ENCODE measurements at regions of chr7 and their contacts with region 1.

Region 1: DNA sequence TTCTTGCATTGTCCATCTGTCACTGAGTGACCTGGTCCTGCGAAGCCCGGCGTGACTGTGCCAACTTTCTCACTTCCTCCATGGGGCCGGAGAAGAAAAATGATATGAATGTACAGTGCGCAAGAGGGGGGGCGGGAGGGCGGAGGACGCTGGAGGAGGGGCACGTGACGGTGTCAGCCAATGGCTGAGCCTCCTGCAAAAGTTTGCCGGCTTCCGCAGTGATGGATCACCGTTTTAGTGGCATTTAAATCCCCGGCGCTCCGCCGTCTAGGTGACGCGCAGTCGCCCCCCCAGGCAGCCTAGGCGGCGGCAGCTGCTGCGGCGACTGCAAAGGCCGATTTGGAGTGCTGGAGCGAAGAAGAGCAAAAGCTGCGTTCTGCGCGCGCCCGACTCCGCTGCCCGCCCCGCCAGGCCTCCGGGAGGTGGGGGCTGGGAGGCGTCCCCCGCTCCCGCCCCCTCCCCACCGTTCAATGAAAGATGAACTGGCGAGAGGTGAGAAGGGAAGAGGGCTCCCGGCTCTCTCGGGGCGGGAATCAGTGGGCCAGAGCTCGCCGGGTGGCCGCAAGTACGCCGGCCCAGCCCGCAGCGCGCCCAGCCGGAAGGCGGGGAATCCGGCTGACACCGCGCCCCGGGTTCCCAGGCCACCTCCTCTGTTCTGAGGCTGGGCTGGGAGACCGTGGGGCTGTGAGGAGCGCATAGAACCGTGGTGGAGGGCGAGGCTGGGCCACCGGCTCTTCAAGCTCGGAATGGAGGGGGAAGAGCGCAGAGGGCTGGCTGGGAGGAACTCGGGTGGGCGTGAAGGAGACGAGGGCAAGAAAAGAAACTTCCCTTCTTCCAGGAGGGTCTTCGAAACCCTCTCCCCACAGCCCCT is at the start of gene HOXA1:
- DNase-seq: peak; percentile 94
- ATAC-seq: peak; percentile 65
- H3K4me3 ChIP-seq: peak within 1 kb of the TSS; percentile 84
- H3K27ac ChIP-seq: peak within 1 kb of the TSS; percentile 88
- H3K4me1 ChIP-seq: peaks cover 35% of the 10 kb centered on the region
- H3K27me3 ChIP-seq: no peaks in the 10 kb centered on the region
- CTCF ChIP-seq: no peak
- total RNA-seq, gene HOXA1: 1.4 and 2.0 TPM in 2 replicates

Region 2: DNA sequence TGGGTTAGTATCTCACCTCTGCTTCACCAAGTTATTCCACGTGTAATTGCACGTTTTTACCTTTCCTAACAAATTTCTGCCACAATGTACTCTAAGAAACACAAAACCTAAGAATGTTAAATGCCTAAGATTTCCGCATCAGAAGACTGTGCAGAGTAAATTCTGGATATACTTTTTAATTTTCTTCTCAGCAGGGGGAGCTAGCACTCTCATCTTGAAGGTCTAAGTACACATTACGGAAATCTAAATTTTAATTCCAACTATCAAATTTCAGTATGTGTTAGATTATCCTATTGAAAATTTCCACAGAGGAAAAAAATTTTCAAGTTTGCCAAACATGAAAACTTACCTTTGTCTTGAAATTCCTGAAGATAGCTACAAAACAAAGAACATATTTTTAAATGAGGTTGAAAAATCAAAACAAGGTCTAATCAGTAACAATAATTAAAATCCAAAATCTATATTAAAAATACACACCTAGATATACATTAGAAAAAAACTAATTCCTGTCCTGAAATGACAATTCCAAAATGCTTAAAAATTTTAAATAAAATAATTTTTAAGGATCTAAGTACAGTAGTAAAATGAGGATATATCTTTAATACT is 242.2 kb before region 1 on chr7:
- CTCF ChIA-PET with region 1: no interaction called
- POLR2A ChIA-PET with region 1: interaction called, 3 read pairs
- intact Hi-C with region 1: loop called (anchors 2 kb)
- DNase-seq: peak; percentile 73
- ATAC-seq: peak; percentile 92
- H3K4me3 ChIP-seq: no peak overlapping the region
- H3K27ac ChIP-seq: no peak overlapping the region
- H3K4me1 ChIP-seq: peaks cover 8% of the 10 kb centered on the region; the same call in 1 of the 2 replicates
- H3K27me3 ChIP-seq: no peaks in the 10 kb centered on the region
- CTCF ChIP-seq: peak; percentile 77

Region 3: GRCh38 chr7:27046854-27047549 is 49.1 kb before region 1 on chr7:
- CTCF ChIA-PET with region 1: no interaction called
- POLR2A ChIA-PET with region 1: interaction called, 6 read pairs
- intact Hi-C with region 1: loop called (anchors 2 kb)
- DNase-seq: peak; percentile 79
- ATAC-seq: peak; percentile 96
- H3K4me3 ChIP-seq: peak overlapping the region; percentile 51; the same call in 1 of the 2 replicates
- H3K27ac ChIP-seq: peak overlapping the region; percentile 68
- H3K4me1 ChIP-seq: peaks cover 13% of the 10 kb centered on the region
- H3K27me3 ChIP-seq: no peaks in the 10 kb centered on the region
- CTCF ChIP-seq: no peak

Region 4: GRCh38 chr7:27134392-27134791 is 38.3 kb after region 1 on chr7:
- CTCF ChIA-PET with region 1: interaction called, 5 read pairs
- POLR2A ChIA-PET with region 1: no interaction called
- intact Hi-C with region 1: loop called (anchors 2 kb)
- DNase-seq: peak; percentile 89
- ATAC-seq: peak; percentile 53
- H3K4me3 ChIP-seq: no peak overlapping the region
- H3K27ac ChIP-seq: peak overlapping the region; percentile 87
- H3K4me1 ChIP-seq: peaks cover 45% of the 10 kb centered on the region
- H3K27me3 ChIP-seq: no peaks in the 10 kb centered on the region
- CTCF ChIP-seq: no peak

Region 5: DNA sequence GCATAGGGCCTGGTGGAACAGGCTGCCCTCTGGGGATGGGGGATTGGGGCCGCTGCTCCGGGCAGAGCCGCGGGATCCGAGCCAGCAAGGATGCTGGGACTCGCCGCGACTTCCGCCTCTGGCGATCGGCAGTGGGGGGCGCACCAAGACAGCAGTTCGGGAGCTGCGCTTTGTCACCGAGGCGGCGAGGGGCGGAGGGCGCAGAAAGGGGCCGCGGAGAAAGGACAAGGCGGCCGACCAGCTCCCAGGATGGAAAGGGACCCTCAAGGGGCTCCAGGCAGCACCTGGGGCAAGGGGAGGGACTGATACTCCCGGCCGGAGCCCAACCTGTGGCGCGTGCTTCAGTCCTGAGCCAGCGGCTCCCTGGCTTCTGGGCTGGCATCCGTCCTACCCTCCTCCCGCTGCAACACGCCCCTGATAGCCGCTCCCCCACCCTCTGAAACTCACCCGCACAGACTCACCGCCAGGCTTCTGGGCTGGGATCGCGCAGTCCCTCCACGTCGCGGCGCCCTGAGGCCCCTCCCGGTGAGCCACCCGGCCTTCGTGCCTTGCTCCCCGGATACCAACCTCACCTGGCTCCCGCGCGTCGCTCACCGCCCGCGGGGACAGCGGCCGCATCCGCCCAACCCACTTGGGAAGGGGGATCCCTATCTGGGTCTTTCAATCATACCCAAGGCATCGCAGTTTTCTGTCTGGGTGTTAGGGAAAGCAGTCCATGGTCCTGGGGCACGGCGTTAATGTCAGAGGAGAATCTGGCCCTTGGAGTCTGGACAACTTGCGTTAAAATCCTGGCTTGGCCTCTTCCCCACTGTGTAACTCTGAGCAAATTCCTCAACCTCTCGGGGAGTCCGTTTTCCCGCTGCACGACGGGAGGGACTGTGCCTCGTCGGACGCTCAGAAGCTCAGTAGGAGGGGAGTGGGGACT is 139.5 kb after region 1 on chr7:
- CTCF ChIA-PET with region 1: no interaction called
- POLR2A ChIA-PET with region 1: no interaction called
- intact Hi-C with region 1: no loop called
- DNase-seq: peak; percentile 62
- ATAC-seq: peak; percentile 76
- H3K4me3 ChIP-seq: peak overlapping the region; percentile 72
- H3K27ac ChIP-seq: no peak overlapping the region
- H3K4me1 ChIP-seq: peaks cover 9% of the 10 kb centered on the region; the same call in 1 of the 2 replicates
- H3K27me3 ChIP-seq: no peaks in the 10 kb centered on the region
- CTCF ChIP-seq: peak; percentile 75

Region 6: GRCh38 chr7:27520815-27521790 is 425.0 kb after region 1 on chr7:
- CTCF ChIA-PET with region 1: no interaction called
- POLR2A ChIA-PET with region 1: interaction called, 11 read pairs
- intact Hi-C with region 1: no loop called
- DNase-seq: no peak
- ATAC-seq: no peak
- H3K4me3 ChIP-seq: no peak overlapping the region
- H3K27ac ChIP-seq: no peak overlapping the region
- H3K4me1 ChIP-seq: no peaks in the 10 kb centered on the region
- H3K27me3 ChIP-seq: no peaks in the 10 kb centered on the region
- CTCF ChIP-seq: no peak